Heart left ventricle (tissue), 16 donors: ENCODE measurements at regions of chr5 and their contacts with region 1.

Region 1: DNA sequence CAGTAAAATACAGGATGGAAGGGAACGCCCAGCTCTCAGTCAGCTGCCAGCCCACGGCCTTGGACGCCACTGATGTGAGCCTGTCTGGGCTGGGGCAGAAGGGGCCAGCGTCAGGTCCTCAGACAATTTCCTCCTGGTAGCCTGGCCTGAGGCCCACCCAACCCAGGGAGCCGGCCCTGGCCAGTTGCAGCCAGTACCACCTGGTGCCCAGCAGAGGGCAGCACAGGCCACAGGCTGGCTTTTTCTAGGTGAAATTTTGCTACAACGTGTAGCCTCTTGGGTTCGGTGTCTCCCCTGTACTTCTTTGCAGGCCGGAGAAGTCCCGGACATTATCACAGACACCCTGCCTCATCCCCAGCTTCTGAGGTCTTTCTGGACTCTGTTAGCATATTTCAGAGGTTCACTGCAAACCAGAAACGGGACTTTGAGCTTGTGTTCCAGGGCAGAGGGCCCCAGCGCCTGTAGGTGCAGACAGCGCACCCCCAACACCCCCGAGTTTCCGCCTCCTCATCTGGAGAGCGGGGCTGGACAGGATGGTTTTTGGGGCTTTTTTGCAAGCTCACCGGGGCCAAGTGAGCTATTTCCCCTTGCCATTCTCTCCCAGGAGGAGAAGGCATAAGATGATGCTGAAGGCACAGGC is 45.9 kb upstream of the KCNMB1 start:
- DNase-seq: peak; percentile 47 to 84 (median 56)
- ATAC-seq: peak; percentile 66 to 87 (median 84)
- H3K4me3 ChIP-seq: no peak overlapping the region
- H3K27ac ChIP-seq: no peak overlapping the region
- H3K4me1 ChIP-seq: peaks cover 0 to 6% (median 0%) of the 10 kb centered on the region in 12 donors
- H3K27me3 ChIP-seq: peaks cover 0 to 6% (median 0%) of the 10 kb centered on the region in 9 donors
- CTCF ChIP-seq: peak; percentile 97 to 99 (median 98)
- POLR2A ChIP-seq: no peak

Region 2: GRCh38 chr5:170393235-170393634 is 41.9 kb before region 1 on chr5:
- intact Hi-C with region 1: no loop called
- DNase-seq: no peak
- ATAC-seq: no peak
- H3K4me3 ChIP-seq: no peak overlapping the region
- H3K27ac ChIP-seq: peak overlapping the region in 1 of 12 donors; percentile 76
- H3K4me1 ChIP-seq: peaks cover 0 to 38% (median 8%) of the 10 kb centered on the region in 12 donors
- H3K27me3 ChIP-seq: peaks cover 0 to 7% (median 0%) of the 10 kb centered on the region in 9 donors
- CTCF ChIP-seq: no peak
- POLR2A ChIP-seq: no peak

Region 3: DNA sequence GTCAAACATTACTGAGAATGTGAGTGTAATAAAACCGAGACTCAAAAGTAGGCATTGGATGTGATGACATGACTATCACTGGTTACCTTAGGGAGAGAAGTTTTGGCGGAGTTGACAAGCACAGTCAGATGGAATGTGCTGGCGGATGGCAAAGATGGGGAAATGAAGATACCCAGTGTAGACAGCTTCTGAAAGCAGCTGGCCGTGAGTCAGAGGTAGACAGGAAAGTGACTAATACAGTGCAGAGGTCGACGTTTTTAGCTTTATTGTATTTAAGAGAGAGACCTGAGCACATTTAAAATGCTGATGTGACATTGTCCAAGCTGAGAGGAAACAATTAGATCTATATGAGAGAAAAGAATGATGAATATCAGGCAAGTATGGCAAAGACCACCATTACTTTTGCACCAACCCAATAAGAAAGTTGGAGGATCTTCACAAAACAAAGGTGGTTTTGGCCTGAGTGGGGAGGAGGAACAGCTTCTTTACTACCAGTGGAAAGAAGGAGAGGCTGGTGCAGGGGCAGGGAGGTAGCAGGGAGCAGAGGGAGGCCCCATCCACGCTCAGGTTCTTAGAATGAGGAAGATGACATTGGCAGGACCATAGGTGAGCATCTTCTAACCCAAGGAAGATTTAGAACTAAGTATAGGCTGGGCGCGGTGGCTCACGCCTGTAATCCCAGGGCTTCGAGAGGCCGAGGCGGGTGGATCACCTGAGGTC is 32.1 kb after region 1 on chr5:
- intact Hi-C with region 1: no loop called
- DNase-seq: peak in 1 of 5 donors; percentile 38
- ATAC-seq: peak in 3 of 4 donors; percentile 44 to 73 (median 50)
- H3K4me3 ChIP-seq: no peak overlapping the region
- H3K27ac ChIP-seq: no peak overlapping the region
- H3K4me1 ChIP-seq: peaks cover 0 to 18% (median 0%) of the 10 kb centered on the region in 12 donors
- H3K27me3 ChIP-seq: no peaks in the 10 kb centered on the region
- CTCF ChIP-seq: no peak
- POLR2A ChIP-seq: no peak

Region 4: GRCh38 chr5:170623576-170624181 is 188.6 kb after region 1 on chr5:
- intact Hi-C with region 1: loop called in 4 of 10 experiments (anchors 1 to 2 kb)
- DNase-seq: peak in 4 of 5 donors; percentile 39 to 50 (median 40)
- ATAC-seq: peak in 3 of 4 donors; percentile 46 to 55 (median 54)
- H3K4me3 ChIP-seq: no peak overlapping the region
- H3K27ac ChIP-seq: no peak overlapping the region
- H3K4me1 ChIP-seq: no peaks in the 10 kb centered on the region
- H3K27me3 ChIP-seq: peaks cover 0 to 4% (median 0%) of the 10 kb centered on the region in 9 donors
- CTCF ChIP-seq: peak; percentile 34 to 71 (median 57)
- POLR2A ChIP-seq: no peak

Region 5: DNA sequence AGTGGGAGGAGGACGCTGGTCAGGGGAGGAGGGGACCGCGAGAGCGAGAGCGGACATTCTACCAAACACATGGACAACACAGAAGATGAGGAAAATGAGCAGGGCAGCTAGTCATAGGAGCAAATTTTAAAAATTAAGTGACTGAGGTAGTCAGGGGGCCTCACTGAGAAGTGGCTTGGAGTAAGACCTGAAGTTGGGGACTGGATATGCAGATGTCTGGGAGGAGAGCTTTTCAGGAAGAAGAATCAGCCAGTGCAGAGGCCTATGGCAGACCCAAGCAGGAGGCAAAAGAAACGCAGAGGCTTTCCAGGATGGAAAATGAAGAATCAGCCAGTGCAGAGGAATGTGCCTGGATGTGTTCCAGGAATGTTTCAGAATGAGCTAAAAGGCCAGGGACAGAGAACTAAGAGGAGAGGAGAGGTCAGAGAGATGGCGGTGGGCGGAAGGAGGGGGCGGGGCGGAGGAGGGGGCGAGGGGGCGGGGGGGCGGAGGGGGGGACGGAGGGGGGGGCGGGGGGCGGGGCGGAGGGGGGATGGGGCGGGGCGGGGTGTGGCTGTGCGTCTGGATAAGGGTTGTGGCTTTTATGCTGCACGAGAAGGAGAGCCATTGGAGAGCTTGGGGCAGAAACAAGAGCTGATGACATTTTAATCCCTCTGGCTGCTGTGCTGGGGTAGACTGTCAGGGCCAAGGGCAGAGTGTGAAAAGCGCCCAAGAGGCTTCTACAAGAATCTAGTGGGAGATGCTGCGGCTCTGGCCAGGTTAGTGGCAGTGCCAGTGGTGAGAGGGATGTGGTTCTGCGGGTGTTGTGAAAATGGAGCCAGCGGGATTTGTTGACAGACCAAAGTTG is 198.4 kb after region 1 on chr5:
- intact Hi-C with region 1: loop called (anchors 1 to 2 kb)
- DNase-seq: peak in 4 of 5 donors; percentile 44 to 78 (median 62)
- ATAC-seq: peak; percentile 62 to 79 (median 69)
- H3K4me3 ChIP-seq: peak overlapping the region in 11 of 12 donors; percentile 11 to 55 (median 39)
- H3K27ac ChIP-seq: peak overlapping the region; percentile 30 to 93 (median 79)
- H3K4me1 ChIP-seq: peaks cover 0 to 39% (median 20%) of the 10 kb centered on the region in 12 donors
- H3K27me3 ChIP-seq: no peaks in the 10 kb centered on the region
- CTCF ChIP-seq: peak in 3 of 12 donors; percentile 5 to 33 (median 30)
- POLR2A ChIP-seq: no peak

Region 6: DNA sequence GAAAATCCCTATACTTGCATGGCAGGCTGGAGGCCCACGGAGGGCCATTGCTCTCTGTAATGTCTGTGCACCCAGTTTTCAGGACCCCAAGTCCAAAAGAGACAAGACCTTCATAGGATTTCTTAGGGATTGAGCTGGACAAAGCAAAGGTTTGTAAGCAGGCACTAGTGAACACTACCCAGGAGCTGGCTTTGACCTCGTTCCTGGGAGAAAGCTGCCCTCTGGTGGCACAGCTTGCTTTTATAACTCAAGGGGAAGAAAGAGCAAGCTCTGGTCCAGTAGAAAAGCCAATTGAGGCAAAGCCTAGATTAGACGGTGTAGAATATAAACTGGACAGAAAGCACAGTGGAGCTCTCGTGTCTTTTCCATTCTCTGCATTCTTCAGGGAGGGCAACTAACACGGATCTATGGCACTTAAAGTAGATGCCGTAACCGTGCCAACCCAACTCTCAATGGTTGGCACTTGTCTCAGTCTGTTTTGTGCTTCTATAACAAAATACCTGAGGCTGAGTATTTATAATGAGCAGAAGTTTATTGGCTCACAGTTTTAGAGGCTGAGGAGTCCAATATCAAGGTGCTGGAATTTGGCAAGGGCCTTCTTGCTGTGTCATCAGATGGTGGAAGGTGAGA is 356.4 kb after region 1 on chr5:
- intact Hi-C with region 1: loop called in 2 of 10 experiments (anchors 2 to 10 kb)
- DNase-seq: peak in 4 of 5 donors; percentile 67 to 76 (median 72)
- ATAC-seq: peak; percentile 61 to 88 (median 78)
- H3K4me3 ChIP-seq: no peak overlapping the region
- H3K27ac ChIP-seq: peak overlapping the region in 3 of 12 donors; percentile 38 to 78 (median 47)
- H3K4me1 ChIP-seq: peaks cover 0 to 41% (median 7%) of the 10 kb centered on the region in 12 donors
- H3K27me3 ChIP-seq: no peaks in the 10 kb centered on the region
- CTCF ChIP-seq: peak; percentile 46 to 80 (median 63)
- POLR2A ChIP-seq: no peak

Region 7: GRCh38 chr5:171342362-171343111 is 907.5 kb after region 1 on chr5:
- intact Hi-C with region 1: loop called in 1 of 10 experiments (anchors 10 kb)
- DNase-seq: peak in 2 of 5 donors; percentile 14 to 31
- ATAC-seq: peak in 3 of 4 donors; percentile 61 to 70 (median 63)
- H3K4me3 ChIP-seq: no peak overlapping the region
- H3K27ac ChIP-seq: no peak overlapping the region
- H3K4me1 ChIP-seq: no peaks in the 10 kb centered on the region
- H3K27me3 ChIP-seq: peaks cover 0 to 25% (median 8%) of the 10 kb centered on the region in 9 donors
- CTCF ChIP-seq: peak; percentile 38 to 72 (median 48)
- POLR2A ChIP-seq: no peak